CD4-positive, alpha-beta T cell (primary cell): ENCODE measurements at regions of chr13 and their contacts with region 1.

Region 1: DNA sequence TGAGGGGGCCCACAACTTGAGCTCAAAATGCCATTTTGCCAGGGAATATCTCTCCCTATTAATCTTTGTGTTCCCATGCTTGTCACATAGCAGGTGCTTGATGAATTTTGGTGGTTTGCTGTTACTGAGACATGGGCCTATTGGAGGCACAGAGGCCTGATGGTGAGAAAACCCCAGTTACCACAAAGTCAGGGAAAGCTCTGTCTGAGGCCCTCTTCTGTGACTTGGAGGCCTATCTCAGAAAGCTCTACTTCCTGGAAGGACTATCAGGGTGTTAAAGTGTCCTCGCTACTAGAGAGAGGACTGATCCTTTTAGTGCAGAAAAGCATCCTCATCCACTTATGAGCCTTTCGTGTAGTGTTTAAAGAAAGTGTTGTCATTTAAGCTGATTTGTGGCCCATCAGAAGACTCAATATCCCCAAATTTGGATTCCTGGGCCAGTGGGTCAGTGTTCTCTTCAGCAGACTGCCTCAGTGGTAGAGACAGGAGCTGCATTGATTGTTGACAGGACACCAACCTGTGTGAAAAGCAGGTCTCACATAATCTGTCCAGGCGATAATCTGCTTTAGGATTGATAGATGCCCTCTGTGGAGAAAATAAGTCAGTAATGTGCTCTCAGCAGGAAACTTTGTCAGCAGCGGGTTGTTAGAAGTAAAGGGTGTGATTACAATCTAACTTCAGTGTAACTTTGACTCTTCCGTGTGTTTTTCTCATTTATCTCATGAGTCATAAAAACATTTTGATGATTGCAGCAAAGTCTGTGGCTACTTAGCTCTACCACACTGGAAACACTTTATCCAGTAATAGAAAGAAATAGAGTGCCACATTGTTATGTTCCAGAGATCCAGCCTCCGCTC is 121.0 kb downstream of the AKAP11 start:
- DNase-seq: peak in 4 of 14 experiments; percentile 46 to 72 (median 64)
- ATAC-seq: peak; percentile 64
- H3K4me3 ChIP-seq: no peak overlapping the region
- H3K4me3 Mint-ChIP-seq: peak overlapping the region; percentile 50
- H3K27ac ChIP-seq: peak overlapping the region; percentile 55 to 60
- H3K27ac Mint-ChIP-seq: peak overlapping the region; percentile 83
- H3K4me1 ChIP-seq: peaks cover 61% of the 10 kb centered on the region
- H3K4me1 Mint-ChIP-seq: peaks cover 77% of the 10 kb centered on the region
- H3K27me3 ChIP-seq: no peaks in the 10 kb centered on the region
- H3K27me3 Mint-ChIP-seq: no peaks in the 10 kb centered on the region
- CTCF ChIP-seq: no peak

Region 2: DNA sequence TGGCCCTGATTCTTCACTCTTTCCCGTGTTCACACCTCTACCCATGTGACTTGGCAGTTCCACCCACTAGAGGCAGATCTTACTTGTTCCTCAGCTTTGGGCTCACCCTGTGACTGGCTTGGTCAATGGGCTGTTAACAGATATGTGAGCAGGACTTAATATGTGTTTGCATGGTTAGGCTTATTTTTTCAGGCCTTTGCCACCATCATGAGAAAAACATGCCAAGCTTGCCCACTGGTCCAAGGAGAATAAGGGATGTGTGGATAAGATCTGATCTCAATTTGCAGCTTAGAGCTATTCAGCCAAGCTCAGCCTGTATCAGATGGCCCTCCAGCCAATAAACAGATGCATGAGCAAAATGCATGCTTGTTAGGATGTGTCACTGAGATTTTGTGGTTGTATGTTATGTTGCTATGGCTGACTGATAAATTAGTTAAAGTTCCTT is 887.6 kb before region 1 on chr13:
- CTCF ChIA-PET with region 1: no interaction called
- POLR2A ChIA-PET with region 1: no interaction called
- intact Hi-C with region 1: no loop called
- DNase-seq: no peak
- ATAC-seq: no peak
- H3K4me3 ChIP-seq: no peak overlapping the region
- H3K4me3 Mint-ChIP-seq: no peak overlapping the region
- H3K27ac ChIP-seq: no peak overlapping the region
- H3K27ac Mint-ChIP-seq: no peak overlapping the region
- H3K4me1 ChIP-seq: peaks cover 33% of the 10 kb centered on the region
- H3K4me1 Mint-ChIP-seq: peaks cover 41% of the 10 kb centered on the region
- H3K27me3 ChIP-seq: no peaks in the 10 kb centered on the region
- H3K27me3 Mint-ChIP-seq: no peaks in the 10 kb centered on the region
- CTCF ChIP-seq: no peak

Region 3: DNA sequence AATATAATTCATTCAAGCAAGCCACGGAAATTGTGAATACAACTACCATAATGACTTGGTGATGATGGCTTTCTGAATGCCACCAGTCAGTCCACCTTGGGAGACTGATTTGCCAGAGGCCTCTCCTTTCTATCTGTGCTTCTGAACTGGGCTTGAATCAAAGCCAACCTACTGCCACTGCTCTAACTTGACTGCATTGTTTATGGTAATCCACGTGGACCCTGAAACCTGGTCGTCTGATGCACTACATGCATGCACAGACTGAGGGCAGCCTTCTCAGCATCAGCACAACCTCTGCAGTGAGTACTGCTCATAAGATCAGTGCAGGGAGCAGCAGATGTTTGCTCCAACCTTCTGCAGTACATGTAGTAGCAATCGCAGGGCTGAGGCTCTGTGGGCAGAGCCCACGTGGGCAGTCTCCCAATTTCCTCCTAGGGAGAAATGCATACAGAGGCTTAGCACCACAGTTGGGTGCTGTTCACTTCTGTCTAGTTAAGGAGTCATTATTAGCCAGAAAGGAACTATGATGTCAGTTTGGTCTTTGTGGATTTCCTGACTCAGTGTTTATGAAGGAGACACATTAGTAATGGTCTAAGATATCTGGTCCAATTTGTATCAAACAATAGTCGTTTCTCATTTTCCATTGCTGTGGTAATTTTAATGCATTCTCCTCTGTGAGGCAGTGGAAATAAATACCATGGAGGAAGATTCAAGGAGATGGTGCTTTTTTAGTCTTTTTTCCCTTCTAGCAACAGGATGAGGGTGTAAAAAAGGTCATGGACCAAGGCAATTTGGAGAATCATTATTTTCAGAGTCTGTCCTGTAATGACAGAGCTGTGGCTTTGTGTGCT is 38.5 kb before region 1 on chr13:
- CTCF ChIA-PET with region 1: no interaction called
- POLR2A ChIA-PET with region 1: interaction called, 9 read pairs
- intact Hi-C with region 1: loop called (anchors 2 to 5 kb)
- DNase-seq: peak in 12 of 14 experiments; percentile 9 to 68 (median 37)
- ATAC-seq: peak; percentile 58
- H3K4me3 ChIP-seq: no peak overlapping the region
- H3K4me3 Mint-ChIP-seq: peak overlapping the region; percentile 35
- H3K27ac ChIP-seq: peak overlapping the region; percentile 32 to 66
- H3K27ac Mint-ChIP-seq: peak overlapping the region; percentile 80
- H3K4me1 ChIP-seq: peaks cover 31% of the 10 kb centered on the region
- H3K4me1 Mint-ChIP-seq: peaks cover 37% of the 10 kb centered on the region
- H3K27me3 ChIP-seq: no peaks in the 10 kb centered on the region
- H3K27me3 Mint-ChIP-seq: no peaks in the 10 kb centered on the region
- CTCF ChIP-seq: no peak

Region 4: DNA sequence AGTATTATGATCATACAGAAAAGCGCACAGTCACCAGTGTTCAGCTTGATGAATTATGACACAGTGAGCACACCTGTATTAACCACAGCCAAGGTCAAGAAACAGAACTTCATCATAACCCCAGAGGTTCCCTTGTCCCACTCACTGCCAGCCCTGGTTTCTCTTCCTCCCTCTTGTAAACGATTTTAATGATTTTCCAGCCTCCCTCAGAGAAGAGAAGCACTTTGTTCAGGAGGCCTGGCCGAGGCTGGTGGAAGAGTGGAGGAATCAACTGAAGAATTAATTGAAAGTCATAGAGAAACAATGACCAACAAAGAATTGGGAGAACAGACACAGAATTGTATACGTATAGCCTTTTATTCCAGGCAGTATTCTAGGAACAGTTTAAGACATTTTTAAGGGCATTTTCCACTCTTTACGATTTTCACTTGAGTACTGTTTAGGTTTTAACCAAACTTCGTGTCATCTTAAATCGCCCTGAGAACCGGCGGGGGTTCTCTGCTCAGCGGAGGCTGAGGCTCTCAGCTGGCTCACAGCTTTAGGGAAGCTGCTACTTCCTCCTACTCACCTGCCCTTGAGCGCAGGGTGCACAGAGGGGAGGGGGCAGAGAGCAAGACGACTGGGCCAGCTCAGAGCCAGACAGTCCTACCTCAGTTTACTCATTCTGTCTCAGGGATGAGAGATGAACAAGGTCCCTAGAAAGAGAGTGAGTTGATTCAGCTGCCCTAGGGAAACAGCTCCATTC is 12.4 kb before region 1 on chr13:
- CTCF ChIA-PET with region 1: no interaction called
- POLR2A ChIA-PET with region 1: interaction called, 20 read pairs
- intact Hi-C with region 1: no loop called
- DNase-seq: peak in 2 of 14 experiments; percentile 10 to 18
- ATAC-seq: no peak
- H3K4me3 ChIP-seq: no peak overlapping the region
- H3K4me3 Mint-ChIP-seq: no peak overlapping the region
- H3K27ac ChIP-seq: no peak overlapping the region
- H3K27ac Mint-ChIP-seq: no peak overlapping the region
- H3K4me1 ChIP-seq: peaks cover 26% of the 10 kb centered on the region
- H3K4me1 Mint-ChIP-seq: peaks cover 33% of the 10 kb centered on the region
- H3K27me3 ChIP-seq: no peaks in the 10 kb centered on the region
- H3K27me3 Mint-ChIP-seq: no peaks in the 10 kb centered on the region
- CTCF ChIP-seq: no peak

Region 5: DNA sequence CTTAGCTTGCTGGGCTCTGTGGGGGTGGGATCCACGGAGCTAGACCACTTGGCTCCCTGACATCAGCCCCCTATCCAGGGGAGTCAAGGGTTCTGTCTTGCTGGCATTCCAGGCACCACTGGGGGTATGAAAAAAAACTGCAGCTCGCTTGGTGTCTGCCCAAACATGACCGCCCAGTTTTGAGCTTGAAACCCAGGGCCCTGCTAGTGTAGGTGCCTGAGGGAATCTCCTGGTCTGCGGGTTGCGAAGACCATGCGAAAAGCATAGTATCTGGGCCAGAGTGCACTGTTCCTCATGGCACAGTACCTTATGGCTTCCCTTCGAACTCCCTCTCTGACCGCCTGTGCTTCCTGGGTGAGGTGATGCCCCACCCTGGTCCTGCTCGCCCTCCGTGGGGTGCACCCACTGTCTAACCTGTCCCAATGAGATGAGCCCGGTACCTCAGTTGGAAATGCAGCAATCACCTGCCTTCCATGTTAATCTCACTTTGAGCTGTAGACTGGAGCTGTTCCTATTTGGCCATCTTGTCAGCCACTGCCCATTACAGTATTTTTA is 60.2 kb after region 1 on chr13:
- CTCF ChIA-PET with region 1: no interaction called
- POLR2A ChIA-PET with region 1: no interaction called
- intact Hi-C with region 1: no loop called
- DNase-seq: no peak
- ATAC-seq: no peak
- H3K4me3 ChIP-seq: no peak overlapping the region
- H3K4me3 Mint-ChIP-seq: no peak overlapping the region
- H3K27ac ChIP-seq: no peak overlapping the region
- H3K27ac Mint-ChIP-seq: no peak overlapping the region
- H3K4me1 ChIP-seq: no peaks in the 10 kb centered on the region
- H3K4me1 Mint-ChIP-seq: peaks cover 4% of the 10 kb centered on the region
- H3K27me3 ChIP-seq: no peaks in the 10 kb centered on the region
- H3K27me3 Mint-ChIP-seq: no peaks in the 10 kb centered on the region
- CTCF ChIP-seq: no peak

Region 6: DNA sequence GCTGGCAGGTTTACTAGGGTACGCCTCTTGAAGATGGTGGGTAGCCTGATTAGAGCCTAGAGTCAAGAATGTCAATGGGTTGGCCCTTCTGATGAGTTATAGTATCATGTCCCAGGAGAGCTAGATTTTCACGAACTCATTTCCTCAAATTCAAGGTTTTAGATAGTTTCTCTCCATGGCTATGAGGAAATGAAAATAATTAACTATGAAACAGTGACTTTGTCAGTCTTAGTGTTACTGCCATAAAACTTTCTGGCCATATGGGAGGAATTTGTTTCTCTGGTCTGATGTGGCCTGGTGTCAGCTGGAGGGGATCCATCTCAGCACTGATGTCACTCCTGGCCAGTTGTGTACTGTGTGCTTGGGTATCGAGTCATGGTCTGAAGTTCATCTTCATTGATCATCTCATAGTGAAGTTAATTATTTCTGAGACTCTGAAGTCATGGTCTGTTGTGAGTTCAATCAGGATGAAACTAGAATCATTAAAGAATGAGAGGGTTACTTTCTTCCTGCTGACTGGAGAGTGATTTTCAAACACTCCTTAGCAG is 131.6 kb after region 1 on chr13:
- CTCF ChIA-PET with region 1: no interaction called
- POLR2A ChIA-PET with region 1: no interaction called
- intact Hi-C with region 1: no loop called
- DNase-seq: no peak
- ATAC-seq: no peak
- H3K4me3 ChIP-seq: no peak overlapping the region
- H3K4me3 Mint-ChIP-seq: no peak overlapping the region
- H3K27ac ChIP-seq: no peak overlapping the region
- H3K27ac Mint-ChIP-seq: no peak overlapping the region
- H3K4me1 ChIP-seq: no peaks in the 10 kb centered on the region
- H3K4me1 Mint-ChIP-seq: no peaks in the 10 kb centered on the region
- H3K27me3 ChIP-seq: no peaks in the 10 kb centered on the region
- H3K27me3 Mint-ChIP-seq: no peaks in the 10 kb centered on the region
- CTCF ChIP-seq: no peak